Tibial artery (tissue), 4 donors: ENCODE measurements at regions of chr20 and their contacts with region 1.

Region 1: GRCh38 chr20:33401184-33401920 is at the start of gene CDK5RAP1:
- DNase-seq: peak; percentile 85 to 88
- H3K4me3 ChIP-seq: peak within 1 kb of the TSS; percentile 75 to 96
- H3K27ac ChIP-seq: peak within 1 kb of the TSS; percentile 71 to 73
- H3K4me1 ChIP-seq: peaks cover 0 to 32% (median 24%) of the 10 kb centered on the region in 4 donors
- H3K27me3 ChIP-seq: no peaks in the 10 kb centered on the region
- CTCF ChIP-seq: no peak

Region 2: GRCh38 chr20:33444797-33445565 is 43.6 kb after region 1 on chr20:
- intact Hi-C with region 1: loop called (anchors 5 kb)
- DNase-seq: no peak
- H3K4me3 ChIP-seq: peak overlapping the region; percentile 71 to 77
- H3K27ac ChIP-seq: peak overlapping the region; percentile 88 to 93
- H3K4me1 ChIP-seq: peaks cover 0 to 38% (median 28%) of the 10 kb centered on the region in 4 donors
- H3K27me3 ChIP-seq: no peaks in the 10 kb centered on the region
- CTCF ChIP-seq: peak in 1 of 2 experiments; percentile 34